ENCODE measurements at regions of chr3 and their contacts with region 1.

Region 1: DNA sequence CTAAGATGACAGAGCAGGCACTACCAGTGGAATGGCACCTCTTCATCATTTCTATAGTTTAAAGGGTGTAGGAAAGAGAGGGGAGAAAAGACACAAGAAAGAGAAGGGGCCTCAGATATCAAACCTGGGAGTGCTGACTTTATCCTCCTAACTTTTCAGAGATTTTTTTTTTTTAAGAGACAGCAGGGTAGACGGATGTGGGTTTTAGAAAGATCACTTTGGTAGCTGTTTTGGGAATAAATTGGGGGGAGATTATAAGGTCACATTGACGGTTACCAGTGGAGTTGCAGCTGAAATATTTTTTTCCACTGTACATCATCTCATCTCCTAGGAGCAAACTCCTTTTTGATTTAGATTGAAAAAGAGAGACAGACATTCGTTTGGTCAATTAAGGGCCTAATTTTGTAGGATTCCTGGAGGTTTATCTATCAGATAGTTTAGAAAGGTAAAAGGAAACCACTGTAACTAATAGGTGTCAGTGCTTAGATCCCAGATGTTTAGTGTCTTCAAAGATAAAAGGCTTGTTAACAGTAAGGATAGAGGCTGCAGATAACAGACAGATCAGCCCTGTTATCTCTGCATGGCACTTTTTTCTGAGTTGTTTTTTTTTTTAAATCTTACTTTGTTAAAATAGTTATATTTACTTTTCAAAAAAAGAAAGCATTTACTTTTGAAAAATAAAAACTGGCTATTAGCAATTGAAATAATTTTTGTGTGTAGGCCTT is 1057.0 kb downstream of the IGSF11 start:
- DNase-seq: no peak
- H3K4me3 ChIP-seq: no peak overlapping the region
- H3K27ac ChIP-seq: no peak overlapping the region
- H3K4me1 ChIP-seq: peaks cover 38% of the 10 kb centered on the region
- CTCF ChIP-seq: no peak

Region 2: DNA sequence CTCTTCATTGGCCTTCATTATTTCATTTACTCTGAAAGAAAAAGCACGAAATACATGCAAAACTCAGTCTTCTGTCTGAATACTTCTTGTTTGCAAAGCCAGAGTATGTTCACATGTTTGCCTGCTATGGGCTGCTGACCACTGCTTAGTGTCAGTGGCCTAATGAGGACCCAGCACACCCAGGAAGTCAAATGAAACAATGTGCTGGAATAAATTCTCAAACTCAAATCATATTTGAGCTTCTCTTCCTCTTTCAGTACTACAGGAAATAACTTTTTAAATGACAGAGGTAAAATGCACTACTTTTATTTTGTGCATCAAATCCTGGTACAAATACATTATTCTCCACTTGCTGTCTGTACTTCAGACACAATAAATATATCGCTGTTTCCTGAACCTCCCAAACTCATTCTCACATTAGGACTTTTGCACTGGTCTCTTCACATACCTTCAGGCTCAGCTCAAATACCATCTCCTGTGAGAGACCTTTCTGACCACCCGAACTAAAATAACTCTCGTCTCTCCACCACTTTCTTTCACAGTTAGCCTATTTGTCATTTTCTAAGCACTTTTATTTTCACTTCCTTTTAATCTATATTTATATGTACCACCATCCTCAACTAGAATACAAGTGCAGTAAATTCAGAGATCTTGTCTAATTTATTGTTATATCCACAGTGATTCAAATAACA is 1091.3 kb before region 1 on chr3:
- CTCF ChIA-PET with region 1: no interaction called
- POLR2A ChIA-PET with region 1: no interaction called
- intact Hi-C with region 1: loop called (anchors 5 kb)
- DNase-seq: peak; percentile 56
- H3K4me3 ChIP-seq: peak overlapping the region; percentile 52
- H3K27ac ChIP-seq: peak overlapping the region; percentile 84
- H3K4me1 ChIP-seq: peaks cover 25% of the 10 kb centered on the region
- CTCF ChIP-seq: no peak

Region 3: DNA sequence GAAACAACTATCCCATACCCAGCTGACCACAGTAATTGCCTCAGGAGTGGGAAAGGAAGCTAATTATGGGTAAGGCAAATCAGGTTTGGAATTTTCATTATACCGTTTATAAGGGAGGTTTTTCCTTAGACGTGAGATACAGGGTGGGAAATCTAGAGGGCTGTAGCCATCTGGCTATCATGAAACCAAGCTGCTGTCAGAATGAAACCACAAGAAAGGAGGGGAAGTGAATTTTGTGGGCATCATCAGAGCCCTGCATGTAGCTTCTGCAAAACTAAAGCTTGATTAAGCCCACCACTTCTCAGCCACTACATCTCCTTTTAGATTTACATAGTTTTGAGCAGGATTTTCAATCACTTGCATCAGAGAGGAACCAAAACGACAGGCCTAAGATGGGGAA is 374.6 kb before region 1 on chr3:
- CTCF ChIA-PET with region 1: no interaction called
- POLR2A ChIA-PET with region 1: interaction called, 3 read pairs
- intact Hi-C with region 1: loop called (anchors 5 kb)
- DNase-seq: peak; percentile 52
- H3K4me3 ChIP-seq: no peak overlapping the region
- H3K27ac ChIP-seq: peak overlapping the region; percentile 40
- H3K4me1 ChIP-seq: peaks cover 26% of the 10 kb centered on the region
- CTCF ChIP-seq: no peak

Region 4: DNA sequence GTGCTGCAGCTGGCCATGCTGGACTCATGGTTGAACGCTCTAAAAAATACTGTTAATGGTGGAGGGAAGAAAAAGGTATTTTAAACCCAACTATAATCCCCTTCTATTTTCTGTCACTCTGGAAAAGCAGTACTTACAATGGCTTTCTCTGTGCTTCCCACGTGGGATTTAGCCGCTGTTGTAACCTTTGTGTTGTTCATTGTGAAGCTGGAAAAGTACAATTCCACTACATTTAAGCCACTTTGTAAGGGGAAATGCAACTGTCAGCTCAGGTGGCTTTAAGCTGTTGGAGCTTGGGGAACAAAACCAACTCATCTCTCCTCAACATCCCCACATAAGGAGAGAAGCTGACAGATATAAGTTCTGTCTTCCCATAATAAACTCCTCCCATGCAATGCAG is 139.4 kb after region 1 on chr3:
- CTCF ChIA-PET with region 1: no interaction called
- POLR2A ChIA-PET with region 1: no interaction called
- intact Hi-C with region 1: no loop called
- DNase-seq: no peak
- H3K4me3 ChIP-seq: no peak overlapping the region
- H3K27ac ChIP-seq: no peak overlapping the region
- H3K4me1 ChIP-seq: no peaks in the 10 kb centered on the region
- CTCF ChIP-seq: no peak